Activated CD4-positive, alpha-beta memory T cell treated with anti-CD3 and anti-CD28 coated beads for 36 hours (primary cell): ENCODE measurements at regions of chr6 and their contacts with region 1.

Region 1: DNA sequence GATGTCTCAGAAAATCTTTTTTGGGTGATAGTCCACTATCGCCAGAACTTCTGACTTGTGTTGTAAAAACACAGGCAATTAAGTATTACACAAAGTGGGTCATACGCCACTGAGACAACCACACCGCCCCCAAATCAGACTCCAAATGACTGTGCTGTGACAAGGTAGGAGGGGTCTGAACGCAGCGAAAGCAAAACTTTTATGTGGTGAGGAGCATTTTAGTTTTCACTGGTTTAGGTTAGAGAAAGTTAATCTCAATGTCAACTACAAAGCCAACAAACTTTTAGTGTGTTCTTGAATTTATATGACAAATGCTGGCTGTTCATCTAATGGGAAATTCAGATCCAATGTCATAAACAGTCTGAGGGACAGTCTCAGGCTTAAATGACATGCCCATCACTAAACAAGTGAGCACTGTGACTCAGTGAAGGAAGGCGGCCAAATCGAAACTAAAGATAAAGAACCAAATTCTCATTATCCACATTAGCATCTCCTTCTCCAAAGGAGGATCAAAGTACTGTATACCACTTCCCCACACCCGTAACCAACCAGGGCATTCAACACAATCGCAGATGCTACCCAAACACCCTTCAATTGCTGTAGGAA is 186.7 kb downstream of the GJA10 start:
- DNase-seq: peak; percentile 94
- H3K4me3 Mint-ChIP-seq: peak overlapping the region; percentile 86
- H3K27ac Mint-ChIP-seq: peak overlapping the region; percentile 92
- H3K4me1 Mint-ChIP-seq: peaks cover 91% of the 10 kb centered on the region
- H3K27me3 Mint-ChIP-seq: no peaks in the 10 kb centered on the region

Region 2: DNA sequence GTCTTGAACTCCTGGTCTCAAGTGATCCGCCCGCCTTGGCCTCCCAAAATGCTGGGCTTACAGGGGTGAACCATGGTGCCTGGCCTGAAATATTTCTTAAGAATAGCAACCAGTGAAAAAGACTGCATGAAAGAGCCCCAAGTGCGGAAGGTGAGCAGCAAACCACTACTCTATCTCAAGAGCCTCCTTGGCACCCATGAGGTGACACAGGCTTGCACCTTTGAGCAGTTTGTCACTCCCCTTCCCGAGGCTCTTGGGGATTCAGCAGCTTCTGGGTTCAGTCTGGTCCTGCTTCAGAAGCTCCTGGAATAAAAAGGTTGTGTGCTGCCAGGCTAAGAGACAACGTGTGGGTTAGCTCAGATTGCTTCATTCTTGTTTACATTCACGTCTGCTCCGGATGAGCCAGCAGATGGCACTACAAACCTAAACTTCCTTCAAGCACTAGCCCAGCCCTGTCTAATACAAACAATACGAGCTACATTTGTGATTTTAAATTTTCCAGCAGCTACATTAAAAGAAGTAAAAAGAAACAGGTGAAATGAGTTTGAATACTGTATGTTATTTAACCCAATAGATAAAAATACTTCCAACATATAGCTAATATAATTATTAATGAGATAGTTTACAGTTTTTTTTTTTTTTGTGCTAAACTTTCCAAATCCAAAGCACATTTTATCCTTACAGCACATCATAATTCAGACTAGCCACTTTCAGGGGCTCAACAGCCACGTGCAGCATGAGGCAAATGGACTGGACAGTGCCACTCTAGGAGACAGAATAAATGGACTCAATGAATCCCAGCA is 140.6 kb before region 1 on chr6:
- CTCF ChIA-PET with region 1: interaction called, 6 read pairs
- POLR2A ChIA-PET with region 1: no interaction called
- intact Hi-C with region 1: loop called (anchors 1 kb)
- DNase-seq: peak; percentile 78
- H3K4me3 Mint-ChIP-seq: no peak overlapping the region
- H3K27ac Mint-ChIP-seq: no peak overlapping the region
- H3K4me1 Mint-ChIP-seq: peaks cover 41% of the 10 kb centered on the region
- H3K27me3 Mint-ChIP-seq: no peaks in the 10 kb centered on the region

Region 3: DNA sequence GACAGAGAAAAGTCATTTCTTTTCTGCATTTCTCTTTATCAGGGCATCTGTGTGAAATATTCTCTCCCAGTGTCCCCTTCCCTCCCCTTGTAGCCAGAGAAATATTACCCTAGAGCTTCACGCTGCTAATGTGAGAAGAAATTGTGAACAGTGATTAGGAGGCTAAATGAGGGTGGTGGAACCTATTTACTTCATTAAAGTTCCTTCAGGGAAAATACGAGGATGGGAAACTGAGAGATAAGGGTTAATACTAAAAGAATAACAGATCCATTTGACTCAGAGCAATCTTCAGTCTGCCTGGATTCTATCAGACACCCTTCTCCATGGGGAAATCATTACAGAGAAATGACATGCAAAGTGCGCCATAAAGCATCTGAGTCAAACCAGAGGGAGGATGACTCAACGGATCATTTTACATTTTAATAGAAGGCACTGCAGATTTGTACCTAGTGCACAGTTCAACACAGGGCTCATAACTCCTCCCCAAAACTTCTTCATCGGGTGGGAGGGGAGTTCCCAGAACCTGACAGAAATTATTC is 55.4 kb before region 1 on chr6:
- CTCF ChIA-PET with region 1: no interaction called
- POLR2A ChIA-PET with region 1: interaction called, 3 read pairs
- intact Hi-C with region 1: loop called (anchors 1 kb)
- DNase-seq: peak; percentile 77
- H3K4me3 Mint-ChIP-seq: peak overlapping the region; percentile 27
- H3K27ac Mint-ChIP-seq: peak overlapping the region; percentile 67
- H3K4me1 Mint-ChIP-seq: peaks cover 77% of the 10 kb centered on the region
- H3K27me3 Mint-ChIP-seq: no peaks in the 10 kb centered on the region

Region 4: GRCh38 chr6:90144396-90144795 is 63.4 kb after region 1 on chr6:
- CTCF ChIA-PET with region 1: no interaction called
- POLR2A ChIA-PET with region 1: no interaction called
- intact Hi-C with region 1: loop called (anchors 2 kb)
- DNase-seq: peak; percentile 74
- H3K4me3 Mint-ChIP-seq: no peak overlapping the region
- H3K27ac Mint-ChIP-seq: peak overlapping the region; percentile 57
- H3K4me1 Mint-ChIP-seq: peaks cover 54% of the 10 kb centered on the region
- H3K27me3 Mint-ChIP-seq: no peaks in the 10 kb centered on the region

Region 5: DNA sequence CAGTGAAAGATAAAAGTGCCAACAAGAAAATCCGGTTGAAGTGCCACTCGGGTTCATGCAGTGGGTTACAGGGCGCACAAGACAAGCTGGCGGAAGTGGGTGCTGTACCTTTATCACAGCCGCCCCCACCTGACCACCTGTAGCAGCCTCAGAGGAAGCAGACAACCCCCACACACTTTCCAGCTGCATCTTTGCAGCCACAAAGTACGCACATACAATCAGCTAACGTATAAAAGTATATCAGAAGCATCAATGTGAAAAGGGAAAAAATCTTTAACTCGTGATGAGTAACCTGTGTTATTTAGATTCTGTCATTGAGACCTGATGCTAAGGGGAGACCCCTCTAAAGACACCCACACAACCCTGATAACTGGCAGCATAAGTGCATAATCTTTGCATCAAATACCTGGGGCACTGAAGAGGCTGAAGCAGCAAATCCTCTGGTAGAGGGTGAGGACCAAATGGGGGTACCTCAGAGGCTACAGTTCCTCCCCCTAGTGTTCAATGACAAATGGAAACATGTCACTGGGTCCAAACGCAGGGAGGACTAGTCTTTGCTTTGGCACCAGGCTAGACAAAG is 193.6 kb after region 1 on chr6:
- CTCF ChIA-PET with region 1: interaction called, 3 read pairs
- POLR2A ChIA-PET with region 1: interaction called, 5 read pairs
- intact Hi-C with region 1: loop called (anchors 1 kb)
- DNase-seq: peak; percentile 96
- H3K4me3 Mint-ChIP-seq: peak overlapping the region; percentile 27
- H3K27ac Mint-ChIP-seq: peak overlapping the region; percentile 87
- H3K4me1 Mint-ChIP-seq: peaks cover 86% of the 10 kb centered on the region
- H3K27me3 Mint-ChIP-seq: no peaks in the 10 kb centered on the region

Region 6: GRCh38 chr6:90472744-90473143 is 391.8 kb after region 1 on chr6:
- CTCF ChIA-PET with region 1: interaction called, 3 read pairs
- POLR2A ChIA-PET with region 1: interaction called, 4 read pairs
- intact Hi-C with region 1: loop called (anchors 1 kb)
- DNase-seq: peak; percentile 69
- H3K4me3 Mint-ChIP-seq: peak overlapping the region; percentile 54
- H3K27ac Mint-ChIP-seq: peak overlapping the region; percentile 83
- H3K4me1 Mint-ChIP-seq: peaks cover 88% of the 10 kb centered on the region
- H3K27me3 Mint-ChIP-seq: peaks cover 1% of the 10 kb centered on the region